Calu3 (cell line): ENCODE measurements at regions of chr12 and their contacts with region 1.

Region 1: GRCh38 chr12:49967042-49967776 is 5.5 kb downstream of the AQP5 start:
- DNase-seq: peak; percentile 86
- H3K4me3 Mint-ChIP-seq: peak overlapping the region; percentile 41
- H3K27ac Mint-ChIP-seq: peak overlapping the region; percentile 68
- H3K4me1 Mint-ChIP-seq: peaks cover 27% of the 10 kb centered on the region
- H3K27me3 Mint-ChIP-seq: no peaks in the 10 kb centered on the region
- CTCF ChIP-seq: peak; percentile 77

Region 2: DNA sequence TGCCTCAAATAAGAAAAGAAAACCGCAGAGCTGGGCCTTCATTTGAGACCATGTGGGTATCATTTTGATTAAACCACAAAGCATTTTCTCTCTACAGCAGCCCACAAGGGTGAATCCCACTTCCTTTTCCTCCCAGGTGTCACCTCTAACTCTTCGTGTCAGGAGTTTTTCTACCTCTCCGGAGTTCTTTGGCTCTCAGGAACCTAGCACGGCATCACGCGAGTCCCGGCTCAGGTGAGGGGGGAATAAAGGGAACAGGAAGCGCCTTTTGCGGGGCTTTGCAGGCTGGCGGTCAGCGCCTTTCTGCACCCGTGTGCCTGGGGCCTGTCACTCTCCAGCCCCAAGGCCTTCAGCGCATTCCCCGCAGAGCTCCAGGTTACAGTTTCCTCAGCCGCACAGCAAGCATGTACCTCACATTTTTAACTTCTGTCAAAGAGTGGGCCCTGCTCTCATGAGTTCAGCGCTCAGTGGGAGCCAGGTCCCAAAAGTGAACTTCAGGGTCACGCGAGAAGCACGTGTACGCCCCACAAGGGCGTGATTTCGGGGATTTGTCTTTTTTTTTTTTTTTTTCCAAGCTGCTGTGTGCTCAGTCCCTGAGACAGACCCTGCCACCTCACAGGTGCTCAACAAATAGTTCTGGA is 344.6 kb before region 1 on chr12:
- CTCF ChIA-PET with region 1: no interaction called
- intact Hi-C with region 1: no loop called
- DNase-seq: peak; percentile 4
- H3K4me3 Mint-ChIP-seq: peak overlapping the region; percentile 68
- H3K27ac Mint-ChIP-seq: peak overlapping the region; percentile 47
- H3K4me1 Mint-ChIP-seq: peaks cover 37% of the 10 kb centered on the region
- H3K27me3 Mint-ChIP-seq: no peaks in the 10 kb centered on the region
- CTCF ChIP-seq: no peak

Region 3: GRCh38 chr12:49945394-49946080 is 21.7 kb before region 1 on chr12:
- CTCF ChIA-PET with region 1: interaction called, 15 read pairs
- intact Hi-C with region 1: no loop called
- DNase-seq: peak; percentile 88
- H3K4me3 Mint-ChIP-seq: peak overlapping the region; percentile 27
- H3K27ac Mint-ChIP-seq: peak overlapping the region; percentile 35
- H3K4me1 Mint-ChIP-seq: peaks cover 32% of the 10 kb centered on the region
- H3K27me3 Mint-ChIP-seq: no peaks in the 10 kb centered on the region
- CTCF ChIP-seq: peak; percentile 74

Region 4: GRCh38 chr12:50025187-50026059 is 58.2 kb after region 1 on chr12 and contains the start of gene RACGAP1:
- CTCF ChIA-PET with region 1: no interaction called
- intact Hi-C with region 1: no loop called
- DNase-seq: peak; percentile 90
- H3K4me3 Mint-ChIP-seq: peak within 1 kb of the TSS; percentile 93
- H3K27ac Mint-ChIP-seq: peak within 1 kb of the TSS; percentile 78
- H3K4me1 Mint-ChIP-seq: peaks cover 10% of the 10 kb centered on the region
- H3K27me3 Mint-ChIP-seq: no peaks in the 10 kb centered on the region
- CTCF ChIP-seq: no peak
- total RNA-seq, gene RACGAP1: 59.4 and 62.0 TPM in 2 replicates

Region 5: DNA sequence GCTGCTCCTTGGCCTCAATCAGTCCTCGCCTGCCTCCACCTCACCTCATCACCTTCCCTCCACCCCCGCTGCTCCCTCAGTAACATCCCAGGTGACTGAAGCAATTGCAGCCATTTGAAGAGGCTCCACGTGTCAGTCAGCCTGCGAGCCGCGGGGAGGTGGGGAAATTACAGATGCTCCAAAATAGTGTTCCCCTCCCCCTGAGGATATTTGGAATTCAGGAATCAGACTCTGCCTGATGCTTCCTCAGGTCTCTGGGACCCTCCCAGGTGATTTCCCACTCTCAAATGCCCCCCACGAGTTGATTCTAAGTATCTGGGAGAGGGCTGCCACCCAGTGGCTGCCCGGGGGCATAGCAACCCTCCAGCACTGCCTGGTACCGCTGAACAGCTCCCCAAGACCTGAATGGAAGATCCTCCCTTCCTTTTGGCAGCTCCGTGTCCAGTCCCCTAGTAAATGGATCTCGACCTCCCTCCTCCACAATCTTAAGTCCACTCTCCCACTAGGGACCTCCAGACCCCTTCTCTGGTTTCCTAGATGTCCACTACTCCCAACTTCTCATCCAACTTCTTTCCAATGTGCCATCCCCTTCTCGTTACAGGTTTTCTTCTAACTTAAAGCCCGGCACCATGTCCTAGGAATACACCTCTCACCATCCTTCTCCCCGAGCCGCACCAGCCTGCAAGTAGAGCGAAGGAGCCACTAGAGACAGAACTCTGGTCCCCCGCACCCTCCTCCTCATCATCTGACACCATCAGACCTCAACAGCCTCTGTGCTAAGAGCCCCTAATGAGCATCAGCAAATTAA is 88.8 kb after region 1 on chr12:
- CTCF ChIA-PET with region 1: interaction called, 5 read pairs
- intact Hi-C with region 1: loop called (anchors 5 kb)
- DNase-seq: peak; percentile 49
- H3K4me3 Mint-ChIP-seq: peak overlapping the region; percentile 59
- H3K27ac Mint-ChIP-seq: peak overlapping the region; percentile 63
- H3K4me1 Mint-ChIP-seq: peaks cover 14% of the 10 kb centered on the region
- H3K27me3 Mint-ChIP-seq: peaks cover 47% of the 10 kb centered on the region
- CTCF ChIP-seq: peak; percentile 89